ENCODE measurements at regions of chr11 and their contacts with region 1.

Region 1: GRCh38 chr11:133834682-133835592 is 10.4 kb downstream of the SPATA19 start:
- DNase-seq: peak; percentile 43 to 73
- ATAC-seq: peak; percentile 91 to 96
- H3K4me3 ChIP-seq: no peak overlapping the region
- H3K27ac ChIP-seq: no peak overlapping the region
- H3K4me1 ChIP-seq: no peaks in the 10 kb centered on the region
- CTCF ChIP-seq: peak; percentile 64
- EP300 ChIP-seq: no peak
- POLR2A ChIP-seq: no peak
- RAD21 ChIP-seq: peak; percentile 71 to 79

Region 2: GRCh38 chr11:133082851-133083488 is 752.0 kb before region 1 on chr11:
- CTCF ChIA-PET with region 1: interaction called, 71 read pairs
- POLR2A ChIA-PET with region 1: no interaction called
- DNase-seq: peak; percentile 11 to 27
- ATAC-seq: peak; percentile 65 to 94
- H3K4me3 ChIP-seq: no peak overlapping the region
- H3K27ac ChIP-seq: no peak overlapping the region
- H3K4me1 ChIP-seq: no peaks in the 10 kb centered on the region
- CTCF ChIP-seq: peak; percentile 69
- EP300 ChIP-seq: no peak
- POLR2A ChIP-seq: no peak
- RAD21 ChIP-seq: peak; percentile 5 to 29; a peak in 1 of 5 replicates

Region 3: GRCh38 chr11:133134314-133135173 is 700.4 kb before region 1 on chr11:
- CTCF ChIA-PET with region 1: interaction called, 32 read pairs
- POLR2A ChIA-PET with region 1: no interaction called
- DNase-seq: peak; percentile 8 to 47
- ATAC-seq: peak; percentile 47 to 89; a peak in 3 of 6 replicates
- H3K4me3 ChIP-seq: no peak overlapping the region
- H3K27ac ChIP-seq: no peak overlapping the region
- H3K4me1 ChIP-seq: no peaks in the 10 kb centered on the region
- CTCF ChIP-seq: peak; percentile 47
- EP300 ChIP-seq: no peak
- POLR2A ChIP-seq: no peak
- RAD21 ChIP-seq: peak; percentile 33 to 47; a peak in 4 of 5 replicates

Region 4: DNA sequence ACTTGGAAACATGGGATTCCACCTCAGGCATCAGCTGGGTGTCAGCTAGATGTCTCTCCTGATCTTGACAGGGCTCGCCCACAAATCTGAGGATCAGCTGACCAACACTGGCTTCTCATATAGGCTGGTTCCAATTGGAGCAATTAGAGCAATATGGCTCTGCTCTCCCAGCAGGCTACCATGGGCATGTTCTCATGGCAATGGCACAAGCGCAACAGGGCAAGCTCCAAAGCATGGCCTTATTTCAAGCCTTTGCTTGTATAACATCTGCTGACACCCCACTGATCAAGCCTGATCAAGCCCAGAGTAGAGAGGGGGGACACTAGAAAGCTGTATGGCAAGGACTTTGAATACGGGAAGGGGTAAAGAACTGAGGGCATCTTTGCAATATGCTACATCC is 51.1 kb after region 1 on chr11:
- CTCF ChIA-PET with region 1: no interaction called
- POLR2A ChIA-PET with region 1: no interaction called
- DNase-seq: no peak
- ATAC-seq: no peak
- H3K4me3 ChIP-seq: no peak overlapping the region
- H3K27ac ChIP-seq: no peak overlapping the region
- H3K4me1 ChIP-seq: no peaks in the 10 kb centered on the region
- CTCF ChIP-seq: no peak
- EP300 ChIP-seq: no peak
- POLR2A ChIP-seq: no peak
- RAD21 ChIP-seq: no peak